Ascending aorta (tissue), 2 donors: ENCODE measurements at regions of chr19 and their contacts with region 1.

Region 1: GRCh38 chr19:11293433-11294389 is 2.2 kb upstream of the TSPAN16 start:
- DNase-seq: peak; percentile 88 to 99
- H3K4me3 ChIP-seq: peak overlapping the region in 1 of 2 donors; percentile 22
- H3K27ac ChIP-seq: peak overlapping the region; percentile 42 to 61
- H3K4me1 ChIP-seq: peaks cover 0 to 7% of the 10 kb centered on the region in 2 donors
- H3K27me3 ChIP-seq: no peaks in the 10 kb centered on the region
- CTCF ChIP-seq: peak; percentile 99

Region 2: DNA sequence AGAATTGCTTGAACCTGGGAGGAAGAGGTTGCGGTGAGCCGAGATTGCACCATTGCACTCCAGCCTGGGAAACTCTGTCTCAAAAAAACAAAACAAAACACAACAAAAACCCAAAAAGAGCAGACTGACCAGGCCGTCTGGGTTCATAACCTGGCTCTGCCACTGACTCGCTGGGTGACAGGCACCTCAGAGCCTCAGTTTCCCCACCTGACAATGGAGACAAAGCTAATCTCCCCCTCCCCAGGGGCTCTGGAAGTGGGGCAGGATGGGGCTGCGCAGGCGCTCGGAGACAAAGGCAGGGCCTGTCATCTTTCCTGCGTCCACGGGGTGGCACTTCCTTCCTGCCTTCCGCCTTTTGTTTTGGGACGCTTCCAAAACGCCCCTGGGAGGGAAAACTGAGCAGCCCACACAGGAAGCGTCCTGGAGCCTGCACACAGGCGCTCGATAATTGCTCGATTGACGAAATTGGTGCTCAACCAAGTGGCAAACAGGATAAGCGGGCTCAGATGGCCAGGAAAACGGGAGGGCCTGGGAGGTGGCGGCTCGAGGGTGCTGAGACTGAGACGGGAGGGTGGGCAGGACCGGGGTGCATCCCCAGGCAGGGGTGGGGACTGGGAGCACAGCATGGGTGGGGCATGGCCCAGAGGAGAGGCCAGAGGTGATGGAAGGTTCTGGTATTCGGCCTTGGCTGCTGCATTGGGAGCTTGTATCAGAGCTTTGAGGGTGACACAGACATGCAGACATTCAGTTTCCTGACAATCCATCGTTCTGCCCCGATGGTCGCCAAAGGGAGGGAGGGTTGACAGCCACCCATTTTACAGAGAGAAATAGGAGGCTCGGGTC is 155.9 kb before region 1 on chr19:
- intact Hi-C with region 1: no loop called
- DNase-seq: peak; percentile 25 to 91
- H3K4me3 ChIP-seq: peak overlapping the region; percentile 24 to 55
- H3K27ac ChIP-seq: peak overlapping the region; percentile 97
- H3K4me1 ChIP-seq: peaks cover 33 to 43% of the 10 kb centered on the region in 2 donors
- H3K27me3 ChIP-seq: no peaks in the 10 kb centered on the region
- CTCF ChIP-seq: peak; percentile 80 to 95 (median 93)

Region 3: DNA sequence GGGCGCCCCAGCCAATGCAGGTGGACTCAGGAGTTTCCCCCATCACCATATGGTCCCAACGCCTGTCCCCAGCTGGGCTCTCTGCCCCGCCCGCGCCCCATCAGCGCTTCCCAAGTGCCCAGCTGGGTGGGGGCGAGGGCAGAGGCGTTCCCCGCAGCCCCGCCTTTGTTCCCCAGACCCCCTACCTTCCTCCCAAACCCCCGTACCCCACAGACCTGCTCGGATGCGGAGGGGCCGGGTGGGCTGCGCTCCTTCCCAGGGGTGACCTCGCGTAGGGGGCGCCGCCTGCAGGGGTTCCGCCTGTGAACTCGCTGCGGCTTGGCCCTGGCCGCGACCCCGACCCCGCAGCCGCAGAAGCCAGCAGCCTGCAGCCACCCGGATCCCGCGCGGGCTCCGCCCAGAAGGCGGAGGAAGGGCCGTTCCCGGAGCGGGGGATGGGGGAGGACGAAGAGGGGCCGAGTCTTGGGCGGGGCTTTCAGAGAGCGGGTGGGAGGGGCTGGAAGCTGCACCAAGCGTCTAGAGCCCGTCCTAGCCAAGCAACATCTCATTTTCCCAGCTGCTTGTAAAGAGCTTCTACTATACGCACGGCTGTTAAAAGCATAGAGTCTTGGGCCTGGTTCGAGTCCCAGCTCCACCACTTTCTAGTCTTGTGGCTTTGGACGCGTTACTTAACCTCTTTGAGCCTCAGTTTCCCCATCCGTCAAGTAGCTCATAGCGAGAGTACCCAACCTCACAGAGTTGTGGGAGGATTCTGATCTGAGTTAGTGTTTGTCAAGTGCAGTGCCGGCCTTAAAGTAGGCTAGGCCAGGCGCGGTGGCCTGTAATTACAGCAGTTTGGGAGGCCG is 45.8 kb after region 1 on chr19 and contains the start of gene RAB3D:
- intact Hi-C with region 1: loop called (anchors 1 kb)
- DNase-seq: peak; percentile 64 to 94
- H3K4me3 ChIP-seq: peak within 1 kb of the TSS; percentile 71 to 90
- H3K27ac ChIP-seq: peak within 1 kb of the TSS; percentile 70 to 82
- H3K4me1 ChIP-seq: peaks cover 6 to 17% of the 10 kb centered on the region in 2 donors
- H3K27me3 ChIP-seq: no peaks in the 10 kb centered on the region
- CTCF ChIP-seq: no peak
- total RNA-seq, gene RAB3D: 33.6 TPM

Region 4: DNA sequence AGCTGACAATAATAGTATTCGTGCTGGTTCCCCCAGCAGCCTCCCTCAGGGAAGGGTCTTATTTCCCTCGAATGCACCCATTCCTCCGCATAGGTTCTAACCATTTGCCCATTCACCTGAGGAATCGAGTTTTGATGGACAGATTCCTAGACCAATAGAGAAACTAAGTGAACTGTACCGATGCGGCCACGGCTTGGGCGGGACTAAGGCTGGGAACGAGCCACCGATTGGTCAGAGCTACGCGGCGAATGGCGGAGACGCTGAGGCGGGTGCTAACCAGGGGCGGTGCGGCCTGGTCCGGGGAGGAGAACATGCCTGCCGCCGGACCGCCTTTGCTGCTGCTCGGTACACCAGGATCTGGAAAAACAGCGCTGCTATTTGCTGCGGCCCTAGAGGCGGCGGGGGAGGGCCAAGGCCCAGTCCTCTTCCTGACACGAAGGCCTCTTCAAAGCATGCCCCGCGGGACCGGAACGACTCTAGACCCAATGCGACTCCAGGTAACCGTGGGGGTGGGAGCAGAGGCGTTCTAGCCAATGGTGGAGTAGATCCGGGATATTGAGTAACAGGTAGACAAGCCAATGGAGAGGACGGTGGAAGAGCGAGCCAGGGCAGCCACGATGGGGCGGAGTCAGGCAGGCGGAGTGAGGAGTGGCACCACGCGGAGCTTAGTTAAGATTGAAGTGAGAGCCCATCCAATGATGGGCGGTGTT is 80.9 kb after region 1 on chr19 and contains the start of gene SWSAP1:
- intact Hi-C with region 1: loop called (anchors 2 kb)
- DNase-seq: peak; percentile 98 to 99
- H3K4me3 ChIP-seq: peak within 1 kb of the TSS; percentile 64 to 65
- H3K27ac ChIP-seq: peak within 1 kb of the TSS; percentile 93 to 94
- H3K4me1 ChIP-seq: peaks cover 3 to 39% of the 10 kb centered on the region in 2 donors
- H3K27me3 ChIP-seq: no peaks in the 10 kb centered on the region
- CTCF ChIP-seq: no peak
- total RNA-seq, gene SWSAP1: 4.5 TPM

Region 5: GRCh38 chr19:11482384-11483050 is 188.8 kb after region 1 on chr19:
- intact Hi-C with region 1: loop called (anchors 1 kb)
- DNase-seq: peak; percentile 49 to 87
- H3K4me3 ChIP-seq: peak overlapping the region; percentile 34 to 44
- H3K27ac ChIP-seq: no peak overlapping the region
- H3K4me1 ChIP-seq: peaks cover 3 to 9% of the 10 kb centered on the region in 2 donors
- H3K27me3 ChIP-seq: peaks cover 24% of the 10 kb centered on the region
- CTCF ChIP-seq: peak; percentile 84 to 96 (median 95)